Heart right ventricle (tissue), 16 donors: ENCODE measurements at regions of chr3 and their contacts with region 1.

Region 1: DNA sequence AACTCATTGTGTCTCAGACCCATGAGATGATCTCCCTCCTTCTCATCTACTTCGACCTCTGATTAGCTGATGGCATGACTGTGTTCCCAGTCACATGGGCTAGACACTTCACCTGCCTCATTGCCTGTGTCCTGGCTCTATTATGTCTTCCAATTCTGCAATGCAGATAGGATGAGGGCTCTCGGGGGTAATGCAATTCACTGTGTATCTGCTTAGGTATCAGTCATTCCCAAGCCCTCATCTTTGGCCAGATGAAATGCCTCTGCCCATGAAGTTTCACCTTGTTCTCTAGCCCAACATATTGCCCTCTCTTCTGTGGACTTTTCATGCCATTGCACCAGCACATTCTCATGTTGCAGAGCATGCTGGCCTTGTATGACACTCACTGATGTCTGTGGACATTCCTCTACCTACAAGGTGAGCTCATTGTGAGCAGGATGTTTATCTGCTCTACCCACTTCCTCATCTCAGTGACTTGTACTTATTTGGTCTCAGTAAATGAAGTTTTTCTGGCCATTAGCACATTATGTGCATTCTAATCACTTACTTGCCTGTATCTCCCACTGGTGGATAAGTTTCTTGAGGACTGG is 32.3 kb downstream of the MOBP start:
- DNase-seq: no peak
- ATAC-seq: no peak
- H3K4me3 ChIP-seq: no peak overlapping the region
- H3K27ac ChIP-seq: no peak overlapping the region
- H3K4me1 ChIP-seq: peaks cover 0 to 7% (median 0%) of the 10 kb centered on the region in 9 donors
- H3K27me3 ChIP-seq: peaks cover 0 to 59% (median 50%) of the 10 kb centered on the region in 7 donors
- CTCF ChIP-seq: no peak

Region 2: DNA sequence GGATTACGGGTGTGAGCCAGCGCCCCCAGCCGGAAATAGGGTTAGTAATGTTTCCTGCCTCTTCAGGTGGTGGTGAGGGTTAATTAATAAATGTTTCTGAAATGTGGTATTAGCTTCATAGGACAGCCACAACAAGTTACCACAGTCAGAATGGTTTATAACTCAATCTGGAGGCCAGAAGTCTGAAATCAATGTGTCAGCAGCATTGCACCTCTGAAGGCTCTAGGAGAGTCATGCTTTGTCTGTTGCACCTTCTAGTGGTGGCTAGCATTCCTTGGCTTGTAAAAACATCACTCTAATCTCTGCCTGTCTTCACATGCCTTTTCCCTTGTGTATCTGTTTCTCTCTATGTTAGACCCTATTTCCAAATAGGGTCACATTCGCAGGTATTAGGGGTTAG is 101.0 kb before region 1 on chr3:
- intact Hi-C with region 1: no loop called
- DNase-seq: no peak
- ATAC-seq: no peak
- H3K4me3 ChIP-seq: no peak overlapping the region
- H3K27ac ChIP-seq: no peak overlapping the region
- H3K4me1 ChIP-seq: no peaks in the 10 kb centered on the region
- H3K27me3 ChIP-seq: no peaks in the 10 kb centered on the region
- CTCF ChIP-seq: no peak

Region 3: GRCh38 chr3:39414421-39414907 is 85.3 kb before region 1 on chr3:
- intact Hi-C with region 1: loop called in 9 of 10 experiments (anchors 2 to 5 kb)
- DNase-seq: no peak
- ATAC-seq: peak in 6 of 8 donors; percentile 36 to 83 (median 55)
- H3K4me3 ChIP-seq: no peak overlapping the region
- H3K27ac ChIP-seq: peak overlapping the region in 2 of 10 donors; percentile 22 to 33
- H3K4me1 ChIP-seq: peaks cover 0 to 28% (median 12%) of the 10 kb centered on the region in 9 donors
- H3K27me3 ChIP-seq: no peaks in the 10 kb centered on the region
- CTCF ChIP-seq: no peak

Region 4: DNA sequence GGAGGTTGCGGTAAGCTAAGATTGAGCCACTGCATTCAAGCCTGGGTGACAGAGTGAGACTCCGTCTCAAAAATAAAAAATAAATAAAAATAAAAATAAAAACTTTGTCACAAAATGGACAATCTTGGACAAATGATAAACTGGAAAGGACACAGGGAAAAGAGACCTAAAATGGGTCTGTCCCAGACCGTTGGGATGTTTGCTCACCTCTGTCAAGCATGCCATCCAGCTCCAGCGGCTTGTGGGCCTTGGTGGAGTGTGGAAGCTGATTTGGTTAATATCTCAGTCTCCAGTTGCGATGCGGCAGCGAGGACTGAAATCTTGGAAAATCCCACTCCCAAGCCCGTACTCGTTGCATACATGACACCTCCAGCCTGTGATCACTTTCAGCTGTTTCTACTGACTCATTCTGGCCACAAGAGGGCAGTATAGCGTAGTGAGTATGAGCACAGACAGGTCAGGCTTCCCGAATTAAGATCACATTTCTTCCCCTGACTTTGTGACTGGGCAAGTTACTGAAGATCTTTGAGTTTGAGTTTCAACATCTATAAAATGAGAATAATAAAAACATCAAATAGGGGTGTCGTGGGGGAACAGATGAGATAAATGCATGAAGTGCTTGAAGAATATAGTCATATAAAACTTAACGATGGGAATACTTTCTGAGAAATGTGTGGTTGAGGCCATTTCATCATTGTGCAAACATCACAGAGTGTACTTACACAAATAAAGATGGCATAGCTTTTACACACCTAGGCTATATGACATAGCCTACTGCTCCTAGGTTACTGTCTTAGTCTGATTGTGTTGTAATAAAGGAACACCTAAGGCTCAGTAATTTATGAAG is 51.9 kb before region 1 on chr3:
- intact Hi-C with region 1: loop called in 9 of 10 experiments (anchors 1 to 10 kb)
- DNase-seq: peak in 1 of 2 donors; percentile 75
- ATAC-seq: peak; percentile 67 to 92 (median 90)
- H3K4me3 ChIP-seq: no peak overlapping the region
- H3K27ac ChIP-seq: no peak overlapping the region
- H3K4me1 ChIP-seq: peaks cover 0 to 5% (median 0%) of the 10 kb centered on the region in 9 donors
- H3K27me3 ChIP-seq: peaks cover 0 to 4% (median 0%) of the 10 kb centered on the region in 7 donors
- CTCF ChIP-seq: peak; percentile 71 to 94 (median 88)

Region 5: GRCh38 chr3:39453134-39453533 is 46.6 kb before region 1 on chr3:
- intact Hi-C with region 1: loop called in 8 of 10 experiments (anchors 1 to 10 kb)
- DNase-seq: no peak
- ATAC-seq: no peak
- H3K4me3 ChIP-seq: no peak overlapping the region
- H3K27ac ChIP-seq: no peak overlapping the region
- H3K4me1 ChIP-seq: no peaks in the 10 kb centered on the region
- H3K27me3 ChIP-seq: peaks cover 0 to 22% (median 3%) of the 10 kb centered on the region in 7 donors
- CTCF ChIP-seq: no peak